CD8-positive, alpha-beta memory T cell (primary cell): ENCODE measurements at regions of chr2 and their contacts with region 1.

Region 1: GRCh38 chr2:86825693-86826381 is 35.1 kb upstream of the CD8A start:
- DNase-seq: peak; percentile 65 to 96 (median 93)
- H3K4me3 ChIP-seq: peak overlapping the region; percentile 91
- H3K4me3 Mint-ChIP-seq: peak overlapping the region; percentile 83 to 97 (median 86)
- H3K27ac ChIP-seq: peak overlapping the region; percentile 84
- H3K27ac Mint-ChIP-seq: peak overlapping the region; percentile 89 to 99 (median 94)
- H3K4me1 ChIP-seq: peaks cover 45% of the 10 kb centered on the region
- H3K4me1 Mint-ChIP-seq: peaks cover 78 to 84% (median 80%) of the 10 kb centered on the region in 3 donors
- H3K27me3 ChIP-seq: no peaks in the 10 kb centered on the region
- H3K27me3 Mint-ChIP-seq: no peaks in the 10 kb centered on the region

Region 2: GRCh38 chr2:86783615-86784339 is 42.1 kb before region 1 on chr2:
- CTCF ChIA-PET with region 1: interaction called, 20 read pairs
- POLR2A ChIA-PET with region 1: interaction called, 27 read pairs
- DNase-seq: peak in 2 of 5 donors; percentile 35 to 73
- H3K4me3 ChIP-seq: no peak overlapping the region
- H3K4me3 Mint-ChIP-seq: peak overlapping the region; percentile 3 to 96 (median 46)
- H3K27ac ChIP-seq: peak overlapping the region; percentile 29
- H3K27ac Mint-ChIP-seq: peak overlapping the region; percentile 94 to 100 (median 100)
- H3K4me1 ChIP-seq: peaks cover 43% of the 10 kb centered on the region
- H3K4me1 Mint-ChIP-seq: peaks cover 66 to 79% (median 77%) of the 10 kb centered on the region in 3 donors
- H3K27me3 ChIP-seq: no peaks in the 10 kb centered on the region
- H3K27me3 Mint-ChIP-seq: peaks cover 0 to 14% of the 10 kb centered on the region in 2 donors

Region 3: GRCh38 chr2:86790676-86791572 is 34.9 kb before region 1 on chr2 and contains the start of gene CD8A:
- CTCF ChIA-PET with region 1: interaction called, 20 read pairs
- POLR2A ChIA-PET with region 1: interaction called, 31 read pairs
- DNase-seq: peak; percentile 78 to 92 (median 85)
- H3K4me3 ChIP-seq: peak within 1 kb of the TSS; percentile 71
- H3K4me3 Mint-ChIP-seq: peak within 1 kb of the TSS; percentile 89 to 98 (median 95)
- H3K27ac ChIP-seq: peak within 1 kb of the TSS; percentile 95
- H3K27ac Mint-ChIP-seq: peak within 1 kb of the TSS; percentile 98 to 100 (median 100)
- H3K4me1 ChIP-seq: peaks cover 64% of the 10 kb centered on the region
- H3K4me1 Mint-ChIP-seq: peaks cover 75 to 80% (median 77%) of the 10 kb centered on the region in 3 donors
- H3K27me3 ChIP-seq: peaks cover 3% of the 10 kb centered on the region
- H3K27me3 Mint-ChIP-seq: peaks cover 0 to 11% of the 10 kb centered on the region in 2 donors
- total RNA-seq, gene CD8A: 359 to 363 TPM

Region 4: DNA sequence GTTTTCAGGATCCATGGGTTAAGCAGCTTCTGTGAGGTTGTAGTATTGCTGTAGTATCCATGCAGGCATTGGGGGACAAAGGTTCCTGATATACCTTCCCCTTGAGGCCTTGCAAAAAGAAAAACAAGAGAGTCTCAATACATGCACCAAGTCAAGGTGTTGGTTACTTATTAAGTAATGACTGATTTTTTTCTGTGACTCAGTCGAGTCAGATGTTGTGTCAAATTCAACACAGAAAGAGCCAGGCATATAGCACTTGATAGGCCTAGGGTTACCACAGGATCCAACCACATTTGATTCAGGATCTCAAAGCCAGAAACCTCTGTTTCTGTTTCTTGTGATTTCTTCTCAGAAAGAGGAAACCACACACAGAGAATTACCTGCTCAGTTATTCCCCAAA is 10.2 kb before region 1 on chr2:
- CTCF ChIA-PET with region 1: interaction called, 96 read pairs
- POLR2A ChIA-PET with region 1: interaction called, 81 read pairs
- DNase-seq: peak in 2 of 5 donors; percentile 30 to 63
- H3K4me3 ChIP-seq: no peak overlapping the region
- H3K4me3 Mint-ChIP-seq: peak overlapping the region; percentile 23 to 74 (median 63)
- H3K27ac ChIP-seq: no peak overlapping the region
- H3K27ac Mint-ChIP-seq: peak overlapping the region; percentile 82 to 98 (median 88)
- H3K4me1 ChIP-seq: peaks cover 45% of the 10 kb centered on the region
- H3K4me1 Mint-ChIP-seq: peaks cover 79 to 94% (median 93%) of the 10 kb centered on the region in 3 donors
- H3K27me3 ChIP-seq: no peaks in the 10 kb centered on the region
- H3K27me3 Mint-ChIP-seq: no peaks in the 10 kb centered on the region